ENCODE measurements at regions of chr17 and their contacts with region 1.

Region 1: GRCh38 chr17:78840725-78841611 is at the start of gene USP36:
- DNase-seq: peak; percentile 100
- H3K4me3 ChIP-seq: peak within 1 kb of the TSS; percentile 75 to 84
- H3K27ac ChIP-seq: peak within 1 kb of the TSS; percentile 79 to 90
- H3K4me1 ChIP-seq: peaks cover 14 to 27% of the 10 kb centered on the region in 2 experiments; a peak in 3 of 4 replicates
- H3K27me3 ChIP-seq: no peaks in the 10 kb centered on the region
- CTCF ChIP-seq: no peak
- EP300 ChIP-seq: no peak; a peak in 1 of 4 replicates
- RAD21 ChIP-seq: no peak
- polyA plus RNA-seq, gene USP36: 34.6 and 41.2 TPM in 2 replicates

Region 2: DNA sequence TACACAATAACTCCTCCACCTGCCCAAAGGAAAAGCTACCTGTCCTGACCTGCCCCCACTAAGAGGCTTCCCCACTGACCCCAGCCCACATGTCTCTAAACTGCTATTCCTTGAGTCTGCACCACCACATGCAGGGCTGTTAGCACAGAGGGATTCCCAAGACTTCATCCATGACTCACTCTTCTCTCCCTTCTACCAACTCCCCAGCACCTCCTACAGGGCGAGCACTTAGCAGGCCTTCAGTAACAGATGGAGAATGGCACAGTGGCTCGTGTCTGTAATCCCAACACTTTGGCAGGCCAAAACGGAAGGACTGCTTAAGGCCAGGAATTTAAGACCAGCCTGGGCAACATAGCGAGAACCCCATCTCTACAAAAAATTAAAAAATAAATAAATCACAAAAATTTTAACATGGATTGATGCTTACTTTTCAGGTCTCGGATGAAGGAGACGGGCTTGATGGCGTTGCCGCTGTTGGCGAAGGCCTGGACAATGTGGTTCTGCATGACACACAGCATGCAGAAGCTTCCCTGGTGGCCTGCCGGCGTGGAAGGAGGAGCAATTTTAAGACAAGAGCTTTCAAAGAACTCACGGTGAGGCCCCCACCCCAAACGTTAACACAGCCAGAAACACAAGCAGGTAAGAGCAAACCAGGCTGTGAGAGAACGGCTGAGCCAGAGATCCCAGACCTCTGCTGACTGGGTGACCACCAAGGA is 12.3 kb before region 1 on chr17:
- CTCF ChIA-PET with region 1: no interaction called
- POLR2A ChIA-PET with region 1: no interaction called
- DNase-seq: peak; percentile 42
- H3K4me3 ChIP-seq: no peak overlapping the region
- H3K27ac ChIP-seq: no peak overlapping the region
- H3K4me1 ChIP-seq: no peaks in the 10 kb centered on the region
- H3K27me3 ChIP-seq: no peaks in the 10 kb centered on the region
- CTCF ChIP-seq: peak; percentile 64
- EP300 ChIP-seq: no peak
- RAD21 ChIP-seq: peak; percentile 21; the same call in 1 of the 2 replicates

Region 3: DNA sequence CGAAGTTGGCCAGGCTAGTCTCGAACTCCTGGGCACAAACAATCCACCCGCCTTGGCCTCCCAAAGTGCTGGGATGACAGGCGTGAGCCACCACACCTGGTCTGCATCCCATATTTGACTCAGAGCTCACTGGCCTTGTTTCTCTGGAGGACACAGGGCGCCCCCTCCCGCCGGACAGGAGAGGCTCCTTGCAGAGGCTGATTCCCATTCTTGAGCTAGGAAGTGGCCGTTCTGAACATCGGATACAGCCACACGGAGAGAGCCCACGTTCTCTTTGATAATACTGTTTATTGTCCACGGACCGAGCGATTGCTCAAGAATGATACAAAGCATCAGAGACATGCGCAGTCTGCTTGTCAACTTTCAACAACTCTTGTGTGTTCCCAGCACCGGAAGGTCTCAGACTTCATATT is 11.7 kb after region 1 on chr17:
- CTCF ChIA-PET with region 1: interaction called, 19 read pairs
- POLR2A ChIA-PET with region 1: no interaction called
- DNase-seq: no peak
- H3K4me3 ChIP-seq: no peak overlapping the region
- H3K27ac ChIP-seq: no peak overlapping the region
- H3K4me1 ChIP-seq: no peaks in the 10 kb centered on the region
- H3K27me3 ChIP-seq: no peaks in the 10 kb centered on the region
- CTCF ChIP-seq: no peak
- EP300 ChIP-seq: no peak
- RAD21 ChIP-seq: no peak

Region 4: DNA sequence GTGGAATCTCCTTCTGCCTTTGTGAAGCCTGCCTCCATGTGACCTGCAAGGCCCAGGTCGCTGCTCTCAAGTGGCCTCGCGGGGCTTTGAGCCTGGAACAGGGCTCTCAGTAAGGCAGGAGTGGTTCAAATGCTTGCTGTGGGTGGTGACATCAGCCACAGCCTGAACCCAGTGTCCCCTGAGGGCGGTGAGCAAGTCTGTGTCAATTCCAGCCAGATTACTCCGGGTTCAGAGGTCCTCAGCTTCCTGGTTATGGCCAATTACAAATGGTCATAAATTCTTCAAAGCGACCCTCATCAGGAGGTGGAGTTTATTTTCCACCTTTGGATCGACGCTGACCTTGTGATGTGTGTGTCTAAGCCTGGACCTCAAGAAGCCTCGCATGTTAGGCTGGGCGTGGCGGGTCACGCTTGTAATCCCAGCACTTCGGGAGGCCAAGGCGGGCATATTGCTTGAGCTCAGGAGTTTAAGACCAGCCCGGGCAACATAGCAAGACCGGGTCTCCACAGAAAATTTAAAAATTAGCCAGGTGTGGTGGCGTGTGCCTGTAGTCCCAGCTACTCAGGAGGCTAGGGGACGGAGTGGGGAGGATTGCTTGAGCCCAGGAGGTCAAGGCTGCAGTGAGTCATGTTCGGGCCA is 121.5 kb after region 1 on chr17:
- CTCF ChIA-PET with region 1: interaction called, 12 read pairs
- POLR2A ChIA-PET with region 1: no interaction called
- DNase-seq: peak; percentile 39
- H3K4me3 ChIP-seq: no peak overlapping the region
- H3K27ac ChIP-seq: no peak overlapping the region
- H3K4me1 ChIP-seq: peaks cover 0 to 8% of the 10 kb centered on the region in 2 experiments; a peak in 1 of 4 replicates
- H3K27me3 ChIP-seq: no peaks in the 10 kb centered on the region
- CTCF ChIP-seq: no peak
- EP300 ChIP-seq: no peak
- RAD21 ChIP-seq: no peak

Region 5: GRCh38 chr17:78986048-78986648 is 145.2 kb after region 1 on chr17:
- CTCF ChIA-PET with region 1: no interaction called
- POLR2A ChIA-PET with region 1: no interaction called
- DNase-seq: no peak
- H3K4me3 ChIP-seq: no peak overlapping the region
- H3K27ac ChIP-seq: no peak overlapping the region
- H3K4me1 ChIP-seq: peaks cover 10% of the 10 kb centered on the region in 2 experiments; a peak in 3 of 4 replicates
- H3K27me3 ChIP-seq: no peaks in the 10 kb centered on the region
- CTCF ChIP-seq: peak; percentile 14; the same call in 1 of the 2 replicates
- EP300 ChIP-seq: no peak
- RAD21 ChIP-seq: peak; percentile 49